Heart left ventricle (tissue), 16 donors: ENCODE measurements at regions of chr3 and their contacts with region 1.

Region 1: DNA sequence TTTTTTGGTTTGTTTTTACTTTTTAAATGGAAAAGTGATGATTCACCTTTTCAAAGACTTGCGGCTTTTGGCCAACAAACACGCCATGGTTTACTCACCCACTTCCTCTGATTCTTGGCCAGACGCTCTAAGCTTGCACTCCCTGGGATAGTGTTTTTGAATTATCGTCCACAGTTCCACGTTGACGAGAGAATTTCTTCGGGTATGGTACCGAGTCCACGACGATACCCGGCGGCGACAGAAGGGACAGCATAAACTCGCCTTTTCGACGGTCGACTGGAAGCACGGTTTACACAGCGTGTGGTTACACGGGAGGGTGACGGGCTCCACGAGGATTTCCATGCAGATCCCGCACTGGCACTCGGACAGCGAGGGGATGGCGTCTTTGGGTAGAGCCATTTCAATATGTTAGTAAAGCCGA is 783 bp downstream of the RNF168 start:
- DNase-seq: peak; percentile 36 to 70 (median 52)
- ATAC-seq: peak; percentile 33 to 67 (median 50)
- H3K4me3 ChIP-seq: peak overlapping the region; percentile 69 to 99 (median 88)
- H3K27ac ChIP-seq: peak overlapping the region; percentile 88 to 99 (median 96)
- H3K4me1 ChIP-seq: peaks cover 0 to 44% (median 22%) of the 10 kb centered on the region in 12 donors
- H3K27me3 ChIP-seq: no peaks in the 10 kb centered on the region
- CTCF ChIP-seq: no peak
- POLR2A ChIP-seq: no peak

Region 2: GRCh38 chr3:196287440-196288148 is 215.2 kb before region 1 on chr3 and contains the start of gene PCYT1A:
- intact Hi-C with region 1: loop called in 1 of 10 experiments (anchors 1 kb)
- DNase-seq: peak; percentile 92 to 96 (median 93)
- ATAC-seq: peak; percentile 96 to 99 (median 98)
- H3K4me3 ChIP-seq: peak within 1 kb of the TSS; percentile 38 to 96 (median 88)
- H3K27ac ChIP-seq: peak within 1 kb of the TSS; percentile 84 to 98 (median 94)
- H3K4me1 ChIP-seq: peaks cover 0 to 48% (median 44%) of the 10 kb centered on the region in 12 donors
- H3K27me3 ChIP-seq: no peaks in the 10 kb centered on the region
- CTCF ChIP-seq: no peak
- POLR2A ChIP-seq: peak in 1 of 2 donors; percentile 90
- total RNA-seq, gene PCYT1A: 90.4 to 149 (median 105) TPM

Region 3: GRCh38 chr3:196418601-196419000 is 84.2 kb before region 1 on chr3:
- intact Hi-C with region 1: no loop called
- DNase-seq: no peak
- ATAC-seq: no peak
- H3K4me3 ChIP-seq: no peak overlapping the region
- H3K27ac ChIP-seq: no peak overlapping the region
- H3K4me1 ChIP-seq: peaks cover 0 to 74% (median 36%) of the 10 kb centered on the region in 12 donors
- H3K27me3 ChIP-seq: no peaks in the 10 kb centered on the region
- CTCF ChIP-seq: no peak
- POLR2A ChIP-seq: no peak

Region 4: DNA sequence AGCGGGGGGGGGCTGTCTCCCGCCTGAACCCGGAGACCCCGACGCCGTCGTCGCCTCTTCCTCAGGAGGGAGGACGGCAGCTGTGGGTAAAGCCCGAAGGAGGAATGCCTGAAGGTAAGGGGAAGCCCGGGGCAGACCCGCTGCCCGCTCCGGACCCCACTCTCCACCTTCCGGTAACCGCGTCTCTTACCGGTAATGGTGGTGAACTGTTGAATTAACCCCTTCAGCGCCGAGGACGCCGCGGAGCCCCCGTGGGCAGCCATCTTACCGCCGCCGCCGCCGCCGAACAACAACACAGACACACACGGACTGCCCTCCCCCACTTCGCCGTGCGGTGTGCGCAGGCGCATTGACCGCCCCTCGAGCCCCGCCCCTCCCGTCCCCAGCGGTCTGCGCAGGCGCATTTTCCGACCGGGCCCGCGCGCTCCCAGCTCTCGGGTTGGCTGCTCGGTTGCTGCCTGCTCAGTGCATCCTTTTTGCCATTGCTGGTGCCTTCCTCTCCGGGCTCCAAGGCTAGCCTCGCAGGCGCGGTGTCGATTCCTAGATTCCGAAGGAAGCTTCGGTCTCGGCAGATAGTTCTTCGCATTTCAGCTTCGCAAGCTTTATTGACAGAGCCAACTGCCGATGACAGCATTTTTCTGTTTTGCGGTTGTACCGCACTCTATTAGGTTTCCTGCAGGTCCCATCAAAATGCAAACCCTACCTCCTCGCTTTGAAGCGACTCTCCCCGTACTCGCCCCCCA is 70.5 kb before region 1 on chr3 and contains the start of gene UBXN7:
- intact Hi-C with region 1: loop called in 4 of 10 experiments (anchors 2 to 10 kb)
- DNase-seq: peak; percentile 95 to 99 (median 95)
- ATAC-seq: peak; percentile 96 to 98 (median 97)
- H3K4me3 ChIP-seq: peak within 1 kb of the TSS; percentile 55 to 99 (median 90)
- H3K27ac ChIP-seq: peak within 1 kb of the TSS; percentile 78 to 98 (median 94)
- H3K4me1 ChIP-seq: peaks cover 0 to 32% (median 21%) of the 10 kb centered on the region in 12 donors
- H3K27me3 ChIP-seq: no peaks in the 10 kb centered on the region
- CTCF ChIP-seq: no peak
- POLR2A ChIP-seq: peak in 1 of 2 donors; percentile 90
- total RNA-seq, gene UBXN7: 10.3 to 50.2 (median 29.5) TPM

Region 5: DNA sequence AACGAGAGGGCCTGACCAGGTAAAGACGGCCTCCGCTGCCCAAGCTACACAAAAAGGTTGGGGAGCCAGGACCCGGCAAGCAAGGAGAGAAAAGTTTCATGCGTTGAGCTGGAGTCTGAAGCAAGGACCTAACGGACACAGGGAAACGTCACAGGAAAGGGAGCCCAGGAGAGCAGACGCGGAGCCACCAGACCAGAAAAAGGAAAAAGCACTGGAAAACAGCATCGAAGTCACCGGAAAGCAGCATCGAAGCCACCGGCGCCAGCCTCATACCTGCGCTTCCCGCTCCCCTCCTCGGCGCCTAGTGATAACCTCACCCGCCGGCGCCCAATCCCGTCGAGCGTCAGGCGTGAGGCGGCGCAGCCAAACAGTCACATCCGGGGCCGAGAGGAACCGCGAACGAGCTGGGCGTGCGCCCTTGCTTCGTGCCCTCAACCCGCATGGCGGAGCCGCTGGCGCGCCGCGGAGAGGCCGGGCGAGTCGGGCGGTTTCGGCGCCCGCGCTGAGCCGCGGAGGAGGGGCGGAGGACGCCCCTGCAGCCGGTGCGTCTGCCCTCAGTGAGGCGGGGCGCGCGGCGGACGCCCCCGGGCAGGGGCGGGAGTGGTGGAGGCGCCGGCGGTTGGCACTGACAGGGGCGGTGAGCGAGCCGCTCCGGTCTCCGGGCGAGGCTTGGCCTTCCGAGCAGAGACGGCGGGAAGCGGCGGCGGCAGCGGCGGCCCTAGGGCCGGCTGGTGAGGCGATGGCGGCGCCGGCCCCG is 65.6 kb after region 1 on chr3 and contains the starts of genes FBXO45 and WDR53:
- intact Hi-C with region 1: loop called in 1 of 10 experiments (anchors 1 kb)
- DNase-seq: peak; percentile 95 to 97 (median 96)
- ATAC-seq: peak; percentile 99 to 100 (median 99)
- H3K4me3 ChIP-seq: peak within 1 kb of the TSS; percentile 52 to 98 (median 80)
- H3K27ac ChIP-seq: peak within 1 kb of the TSS in 11 of 12 donors; percentile 68 to 93 (median 83)
- H3K4me1 ChIP-seq: peaks cover 0 to 45% (median 22%) of the 10 kb centered on the region in 12 donors
- H3K27me3 ChIP-seq: no peaks in the 10 kb centered on the region
- CTCF ChIP-seq: peak in 2 of 12 donors; percentile 7 to 15
- POLR2A ChIP-seq: peak in 1 of 2 donors; percentile 76
- total RNA-seq, gene FBXO45: 5.3 to 7.9 (median 6.6) TPM
- total RNA-seq, gene WDR53: 4.2 to 15.5 (median 8.4) TPM